ENCODE measurements at regions of chr21 and their contacts with region 1.

Region 1: DNA sequence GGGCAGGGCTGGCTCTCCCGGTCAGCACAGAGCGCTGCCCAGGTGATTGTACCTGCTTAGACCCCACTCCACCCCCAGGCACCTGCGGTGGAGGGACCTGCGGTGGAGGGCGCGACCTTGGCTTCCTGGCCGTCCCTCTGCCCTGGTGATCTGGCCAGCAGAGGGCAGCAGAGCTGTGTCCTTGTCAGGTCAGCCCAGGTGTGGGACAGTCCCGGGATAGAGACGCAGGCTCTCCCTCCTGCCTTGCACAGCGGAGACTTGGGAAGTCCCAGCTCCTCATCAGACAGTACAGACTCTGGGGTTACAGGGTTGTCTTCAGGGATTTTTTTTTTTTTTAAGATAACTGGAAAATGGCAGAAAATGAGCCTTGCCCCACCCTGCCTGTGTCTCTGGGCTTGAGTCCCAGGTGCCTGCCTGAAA is 10.0 kb downstream of the SLX9 start:
- DNase-seq: peak; percentile 64 to 92 (median 84)
- ATAC-seq: peak; percentile 85
- H3K4me3 ChIP-seq: no peak overlapping the region
- H3K4me3 Mint-ChIP-seq: no peak overlapping the region
- H3K27ac ChIP-seq: no peak overlapping the region
- H3K27ac Mint-ChIP-seq: no peak overlapping the region
- H3K4me1 ChIP-seq: peaks cover 8% of the 10 kb centered on the region
- H3K4me1 Mint-ChIP-seq: peaks cover 17% of the 10 kb centered on the region
- H3K27me3 ChIP-seq: no peaks in the 10 kb centered on the region
- H3K27me3 Mint-ChIP-seq: no peaks in the 10 kb centered on the region
- CTCF ChIP-seq: peak; percentile 80

Region 2: DNA sequence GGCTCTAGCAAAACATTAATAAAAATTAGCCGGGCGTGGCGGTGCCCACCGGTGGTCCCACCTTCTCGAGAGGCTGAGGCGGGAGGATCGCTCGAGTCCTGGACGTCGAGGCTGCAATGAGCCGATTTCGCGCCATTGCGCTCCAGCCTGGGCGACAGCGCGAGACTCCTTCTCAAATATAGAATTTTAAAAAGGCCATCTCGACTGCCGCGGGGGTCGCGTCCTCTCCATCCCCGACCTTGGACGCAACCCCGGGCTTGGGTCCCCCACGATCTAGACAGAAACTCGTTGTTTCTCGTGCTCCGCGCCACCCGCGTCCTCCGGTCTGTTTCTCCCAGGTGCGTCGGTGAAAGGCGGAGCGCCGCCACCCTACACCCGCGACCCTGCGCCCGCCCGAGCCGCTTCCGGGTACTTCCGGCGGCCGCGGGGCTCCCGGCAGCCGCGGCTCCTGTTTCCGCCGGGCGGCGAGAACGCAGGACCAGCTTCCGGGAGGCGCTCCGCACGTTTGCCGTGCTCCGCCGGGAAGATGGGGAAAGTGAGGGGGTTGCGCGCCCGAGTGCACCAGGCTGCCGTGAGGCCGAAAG is 10.2 kb before region 1 on chr21 and contains the start of gene SLX9:
- CTCF ChIA-PET with region 1: interaction called, 13 read pairs
- POLR2A ChIA-PET with region 1: interaction called, 4 read pairs
- intact Hi-C with region 1: no loop called
- DNase-seq: peak; percentile 57 to 90 (median 78)
- ATAC-seq: peak; percentile 90
- H3K4me3 ChIP-seq: peak within 1 kb of the TSS; percentile 72 to 79
- H3K4me3 Mint-ChIP-seq: peak within 1 kb of the TSS; percentile 86
- H3K27ac ChIP-seq: peak within 1 kb of the TSS; percentile 40 to 56
- H3K27ac Mint-ChIP-seq: peak within 1 kb of the TSS; percentile 87
- H3K4me1 ChIP-seq: peaks cover 36% of the 10 kb centered on the region
- H3K4me1 Mint-ChIP-seq: peaks cover 41% of the 10 kb centered on the region
- H3K27me3 ChIP-seq: no peaks in the 10 kb centered on the region
- H3K27me3 Mint-ChIP-seq: no peaks in the 10 kb centered on the region
- CTCF ChIP-seq: no peak
- total RNA-seq, gene SLX9: 8.2 to 10.0 TPM

Region 3: DNA sequence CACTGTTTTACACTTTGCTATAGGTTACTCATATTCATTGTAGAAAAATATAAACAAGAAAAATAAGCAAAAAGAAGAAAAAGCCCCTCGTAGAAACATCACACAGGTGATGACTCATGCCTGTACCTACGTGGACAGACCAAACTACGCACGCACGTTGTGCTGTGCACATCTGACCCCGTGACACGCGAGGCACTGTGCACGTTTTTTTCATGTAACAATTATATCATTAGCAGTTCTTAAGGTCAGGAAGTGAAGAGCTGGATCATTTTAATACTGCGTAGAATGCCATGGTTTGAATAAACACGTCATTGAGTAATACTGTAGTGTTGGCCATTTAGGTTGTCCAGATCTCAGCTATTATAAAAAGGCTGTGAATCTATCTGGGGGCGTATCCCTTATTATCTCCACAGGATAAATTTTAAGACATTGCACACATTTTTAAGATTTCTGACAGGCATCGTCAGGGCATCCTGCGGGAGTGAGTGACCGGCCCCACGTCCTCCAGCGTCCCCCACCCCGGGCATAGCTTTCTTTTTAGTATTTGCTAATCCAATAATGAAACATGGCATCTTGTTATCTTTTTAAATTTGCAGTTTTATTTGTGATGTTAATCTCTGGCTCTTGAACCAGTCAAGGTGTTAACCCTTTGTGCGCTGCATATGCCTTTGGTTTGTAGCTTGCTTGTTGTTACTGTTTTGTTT is 101.1 kb after region 1 on chr21:
- CTCF ChIA-PET with region 1: interaction called, 8 read pairs
- POLR2A ChIA-PET with region 1: no interaction called
- intact Hi-C with region 1: loop called in 1 of 2 experiments (anchors 10 kb)
- DNase-seq: no peak
- ATAC-seq: no peak
- H3K4me3 ChIP-seq: no peak overlapping the region
- H3K4me3 Mint-ChIP-seq: no peak overlapping the region
- H3K27ac ChIP-seq: no peak overlapping the region
- H3K27ac Mint-ChIP-seq: no peak overlapping the region
- H3K4me1 ChIP-seq: no peaks in the 10 kb centered on the region
- H3K4me1 Mint-ChIP-seq: no peaks in the 10 kb centered on the region
- H3K27me3 ChIP-seq: no peaks in the 10 kb centered on the region
- H3K27me3 Mint-ChIP-seq: peaks cover 21% of the 10 kb centered on the region
- CTCF ChIP-seq: no peak

Region 4: DNA sequence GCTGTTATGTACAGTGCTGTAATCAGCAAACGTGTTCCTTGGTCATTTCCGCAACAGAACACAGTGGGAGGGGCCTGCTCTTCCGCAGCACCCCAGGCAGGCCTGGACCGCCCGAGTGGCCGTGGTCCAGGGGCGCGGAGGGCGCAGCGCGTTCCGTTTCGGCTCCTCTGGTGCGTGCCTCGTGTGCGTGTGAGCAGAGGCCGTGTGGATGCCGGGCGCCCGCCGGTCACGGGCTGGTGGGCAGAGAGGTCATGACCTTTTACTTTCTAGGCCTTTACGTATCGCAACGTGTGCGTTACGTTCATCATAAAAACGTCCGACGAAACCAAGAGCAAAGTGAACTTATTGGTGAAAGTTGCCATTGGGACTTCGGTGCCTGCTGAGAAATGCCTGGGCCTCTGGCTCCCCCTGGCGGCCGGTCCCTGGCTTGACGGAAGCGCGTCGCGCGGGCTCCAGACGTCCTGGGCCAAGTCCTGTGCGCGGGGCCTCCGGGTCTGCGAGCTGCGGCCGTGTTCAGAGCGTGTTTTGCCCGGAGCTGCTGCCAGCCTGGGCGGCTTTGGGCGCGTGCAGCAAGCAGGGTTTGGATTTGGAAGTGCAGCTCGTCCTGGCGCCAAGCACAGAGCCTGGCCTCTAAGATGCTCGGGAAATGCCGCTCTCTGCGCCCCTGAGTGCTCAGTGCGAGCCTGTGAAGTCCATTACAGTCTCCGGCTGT is 489.5 kb after region 1 on chr21:
- CTCF ChIA-PET with region 1: interaction called, 3 read pairs
- POLR2A ChIA-PET with region 1: no interaction called
- intact Hi-C with region 1: loop called in 1 of 2 experiments (anchors 1 kb)
- DNase-seq: peak; percentile 71 to 93 (median 86)
- ATAC-seq: peak; percentile 87
- H3K4me3 ChIP-seq: peak overlapping the region; percentile 26 to 29
- H3K4me3 Mint-ChIP-seq: peak overlapping the region; percentile 65
- H3K27ac ChIP-seq: peak overlapping the region in 1 of 2 experiments; percentile 40
- H3K27ac Mint-ChIP-seq: no peak overlapping the region
- H3K4me1 ChIP-seq: peaks cover 6% of the 10 kb centered on the region
- H3K4me1 Mint-ChIP-seq: peaks cover 6% of the 10 kb centered on the region
- H3K27me3 ChIP-seq: peaks cover 0 to 9% of the 10 kb centered on the region in 2 experiments
- H3K27me3 Mint-ChIP-seq: peaks cover 11% of the 10 kb centered on the region
- CTCF ChIP-seq: peak; percentile 90